ENCODE measurements at regions of chr17 and their contacts with region 1.

Region 1: GRCh38 chr17:82292251-82293154 is 19.0 kb upstream of the CSNK1D start:
- DNase-seq: peak; percentile 92
- H3K4me3 Mint-ChIP-seq: peak overlapping the region; percentile 90
- H3K27ac Mint-ChIP-seq: peak overlapping the region; percentile 93
- H3K4me1 Mint-ChIP-seq: peaks cover 48% of the 10 kb centered on the region
- H3K27me3 Mint-ChIP-seq: peaks cover 2% of the 10 kb centered on the region

Region 2: GRCh38 chr17:82236142-82236981 is 56.1 kb before region 1 on chr17:
- intact Hi-C with region 1: loop called (anchors 1 kb)
- DNase-seq: peak; percentile 60
- H3K4me3 Mint-ChIP-seq: no peak overlapping the region
- H3K27ac Mint-ChIP-seq: no peak overlapping the region
- H3K4me1 Mint-ChIP-seq: peaks cover 30% of the 10 kb centered on the region
- H3K27me3 Mint-ChIP-seq: no peaks in the 10 kb centered on the region

Region 3: GRCh38 chr17:82400830-82401229 is 108.3 kb after region 1 on chr17:
- intact Hi-C with region 1: no loop called
- DNase-seq: peak; percentile 62
- H3K4me3 Mint-ChIP-seq: peak overlapping the region; percentile 78
- H3K27ac Mint-ChIP-seq: peak overlapping the region; percentile 69
- H3K4me1 Mint-ChIP-seq: peaks cover 20% of the 10 kb centered on the region
- H3K27me3 Mint-ChIP-seq: no peaks in the 10 kb centered on the region

Measured in activated T-helper 1 cell treated with anti-CD3 and anti-CD28 coated beads, Interleukin-12 subunit alpha, Interleukin-12 subunit beta, Interleukin-2, Interleukin-4 antibody, amounts not matched to agents 30 ng/mL and 10 ng/mL and 1 ng/mL, durations not matched to agents 14 hours and 24 hours and 36 hours (primary cell).